MCF 10A (cell line): ENCODE measurements at regions of chr14 and their contacts with region 1.

Region 1: DNA sequence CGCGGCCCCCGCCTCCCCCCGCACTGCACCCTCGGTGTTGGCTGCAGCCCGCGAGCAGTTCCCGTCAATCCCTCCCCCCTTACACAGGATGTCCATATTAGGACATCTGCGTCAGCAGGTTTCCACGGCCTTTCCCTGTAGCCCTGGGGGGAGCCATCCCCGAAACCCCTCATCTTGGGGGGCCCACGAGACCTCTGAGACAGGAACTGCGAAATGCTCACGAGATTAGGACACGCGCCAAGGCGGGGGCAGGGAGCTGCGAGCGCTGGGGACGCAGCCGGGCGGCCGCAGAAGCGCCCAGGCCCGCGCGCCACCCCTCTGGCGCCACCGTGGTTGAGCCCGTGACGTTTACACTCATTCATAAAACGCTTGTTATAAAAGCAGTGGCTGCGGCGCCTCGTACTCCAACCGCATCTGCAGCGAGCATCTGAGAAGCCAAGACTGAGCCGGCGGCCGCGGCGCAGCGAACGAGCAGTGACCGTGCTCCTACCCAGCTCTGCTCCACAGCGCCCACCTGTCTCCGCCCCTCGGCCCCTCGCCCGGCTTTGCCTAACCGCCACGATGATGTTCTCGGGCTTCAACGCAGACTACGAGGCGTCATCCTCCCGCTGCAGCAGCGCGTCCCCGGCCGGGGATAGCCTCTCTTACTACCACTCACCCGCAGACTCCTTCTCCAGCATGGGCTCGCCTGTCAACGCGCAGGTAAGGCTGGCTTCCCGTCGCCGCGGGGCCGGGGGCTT is at the start of gene FOS:
- DNase-seq: peak; percentile 95
- H3K4me3 Mint-ChIP-seq: peak within 1 kb of the TSS; percentile 88
- H3K27ac Mint-ChIP-seq: peak within 1 kb of the TSS; percentile 99
- H3K4me1 Mint-ChIP-seq: peaks cover 31% of the 10 kb centered on the region
- H3K27me3 Mint-ChIP-seq: peaks cover 11% of the 10 kb centered on the region
- CTCF ChIP-seq: no peak
- total RNA-seq, gene FOS: 73.1 and 139 TPM in 2 replicates

Region 2: GRCh38 chr14:75126679-75127473 is 151.7 kb before region 1 on chr14 and contains the start of gene NEK9:
- CTCF ChIA-PET with region 1: interaction called, 15 read pairs
- POLR2A ChIA-PET with region 1: interaction called, 37 read pairs
- intact Hi-C with region 1: loop called (anchors 1 kb)
- DNase-seq: peak; percentile 88
- H3K4me3 Mint-ChIP-seq: peak within 1 kb of the TSS; percentile 72
- H3K27ac Mint-ChIP-seq: peak within 1 kb of the TSS; percentile 99
- H3K4me1 Mint-ChIP-seq: peaks cover 33% of the 10 kb centered on the region
- H3K27me3 Mint-ChIP-seq: no peaks in the 10 kb centered on the region
- CTCF ChIP-seq: no peak
- total RNA-seq, gene NEK9: 112 and 113 TPM in 2 replicates

Region 3: DNA sequence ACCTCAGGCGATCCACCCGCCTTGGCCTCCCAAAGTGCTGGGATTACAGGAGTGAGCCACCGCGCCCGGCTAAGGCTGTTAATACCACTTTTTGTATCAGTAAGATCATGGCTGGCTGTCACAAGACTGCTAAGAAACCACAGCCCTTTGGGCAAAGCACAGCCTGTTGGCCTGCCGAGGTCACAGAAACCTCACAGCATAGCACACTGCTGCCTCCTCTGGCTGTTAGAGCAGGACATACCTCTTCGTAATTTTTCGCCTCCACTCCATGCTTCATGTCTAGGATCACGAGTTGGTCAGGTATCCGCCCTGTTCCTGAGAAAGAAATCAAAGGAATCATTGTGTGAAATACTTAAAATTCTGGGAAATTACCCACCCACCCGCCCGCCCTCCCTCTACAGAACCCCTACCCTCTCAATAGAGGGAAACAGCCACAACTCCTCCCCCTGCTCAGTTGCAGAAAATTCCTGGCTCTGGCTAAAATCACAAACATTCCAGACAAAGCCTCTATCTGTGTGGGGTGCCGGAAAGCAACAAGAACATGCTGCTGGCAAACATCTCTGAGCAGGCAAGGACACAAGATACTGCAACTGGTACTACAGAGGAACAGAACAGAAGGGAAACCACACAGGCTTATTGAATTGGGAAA is 131.0 kb before region 1 on chr14:
- CTCF ChIA-PET with region 1: interaction called, 5 read pairs
- POLR2A ChIA-PET with region 1: interaction called, 12 read pairs
- intact Hi-C with region 1: loop called (anchors 5 kb)
- DNase-seq: peak; percentile 38
- H3K4me3 Mint-ChIP-seq: peak overlapping the region; percentile 66
- H3K27ac Mint-ChIP-seq: peak overlapping the region; percentile 91
- H3K4me1 Mint-ChIP-seq: peaks cover 60% of the 10 kb centered on the region
- H3K27me3 Mint-ChIP-seq: no peaks in the 10 kb centered on the region
- CTCF ChIP-seq: peak; percentile 32

Region 4: DNA sequence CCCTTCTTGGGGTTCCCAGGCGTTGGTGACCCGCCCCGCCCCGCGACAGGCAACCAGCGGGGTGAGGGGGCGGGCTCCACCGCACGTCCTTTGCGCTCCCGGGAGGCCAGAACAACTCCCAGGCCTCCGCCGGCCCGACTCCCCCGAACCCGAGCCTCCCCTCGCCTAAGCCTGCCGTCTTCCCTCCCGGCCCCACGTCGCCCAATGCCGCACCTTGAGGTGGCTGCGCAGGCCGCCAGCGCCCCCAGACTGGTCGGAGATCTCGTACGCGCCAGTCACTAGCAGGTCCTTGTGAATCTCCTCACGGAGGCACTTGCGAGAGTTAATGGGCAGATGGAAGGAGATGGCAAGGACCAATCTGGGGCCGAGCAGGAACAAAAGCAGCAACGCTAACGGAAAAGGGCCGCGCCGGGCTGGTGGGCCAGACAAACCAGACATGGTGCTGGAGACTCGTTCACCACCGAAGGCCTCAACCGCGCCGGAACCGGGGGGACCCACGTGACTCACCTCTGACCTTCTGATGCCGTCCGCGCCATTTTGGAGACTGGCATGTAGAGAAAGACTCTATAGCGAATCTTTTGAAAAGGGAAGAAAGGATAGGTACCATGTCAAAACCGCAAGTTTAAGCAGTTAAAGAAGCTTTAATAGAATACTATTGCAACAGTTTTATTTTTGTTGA is 102.3 kb before region 1 on chr14 and contains the start of gene TMED10:
- CTCF ChIA-PET with region 1: interaction called, 5 read pairs
- POLR2A ChIA-PET with region 1: interaction called, 41 read pairs
- intact Hi-C with region 1: loop called (anchors 1 kb)
- DNase-seq: peak; percentile 93
- H3K4me3 Mint-ChIP-seq: peak within 1 kb of the TSS; percentile 98
- H3K27ac Mint-ChIP-seq: peak within 1 kb of the TSS; percentile 99
- H3K4me1 Mint-ChIP-seq: peaks cover 22% of the 10 kb centered on the region
- H3K27me3 Mint-ChIP-seq: no peaks in the 10 kb centered on the region
- CTCF ChIP-seq: no peak
- total RNA-seq, gene TMED10: 454 and 526 TPM in 2 replicates

Region 5: GRCh38 chr14:75217508-75218206 is 60.9 kb before region 1 on chr14:
- CTCF ChIA-PET with region 1: no interaction called
- POLR2A ChIA-PET with region 1: interaction called, 14 read pairs
- intact Hi-C with region 1: no loop called
- DNase-seq: no peak
- H3K4me3 Mint-ChIP-seq: no peak overlapping the region
- H3K27ac Mint-ChIP-seq: no peak overlapping the region
- H3K4me1 Mint-ChIP-seq: peaks cover 19% of the 10 kb centered on the region
- H3K27me3 Mint-ChIP-seq: no peaks in the 10 kb centered on the region
- CTCF ChIP-seq: no peak

Region 6: DNA sequence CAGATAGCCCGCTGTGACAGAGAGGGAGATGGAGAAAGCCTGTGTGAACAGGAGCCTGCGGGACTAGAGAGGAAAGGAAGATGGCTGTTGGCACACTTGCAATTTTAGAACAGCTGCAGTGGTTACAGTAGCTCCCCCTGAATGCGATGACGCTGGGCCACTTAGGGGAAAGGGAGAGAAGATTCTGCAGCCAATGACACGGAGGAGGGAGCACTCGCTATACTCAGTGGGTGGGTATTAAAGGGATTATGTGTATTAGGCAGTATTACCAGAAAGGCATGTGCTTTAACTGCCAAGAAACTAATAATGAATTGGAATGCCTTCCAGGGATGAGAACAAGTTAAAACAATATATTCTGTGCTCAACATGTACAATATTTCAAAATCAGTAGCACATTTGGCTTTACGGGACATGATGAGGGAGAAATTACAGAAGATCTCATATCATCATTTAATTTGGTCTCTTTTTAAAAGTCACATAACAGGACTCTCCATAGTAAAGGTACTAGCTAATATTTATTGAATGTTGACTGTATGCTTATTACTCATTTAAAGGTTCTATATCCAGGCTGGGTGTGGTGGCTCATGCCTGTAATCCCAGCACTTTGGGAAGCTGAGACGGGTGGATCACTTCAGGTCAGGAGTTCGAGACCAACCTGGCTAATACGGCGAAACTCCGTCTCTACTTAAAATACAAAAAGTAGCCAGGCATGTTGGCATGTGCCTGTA is 35.9 kb before region 1 on chr14:
- CTCF ChIA-PET with region 1: interaction called, 4 read pairs
- POLR2A ChIA-PET with region 1: interaction called, 53 read pairs
- intact Hi-C with region 1: no loop called
- DNase-seq: peak; percentile 95
- H3K4me3 Mint-ChIP-seq: peak overlapping the region; percentile 2
- H3K27ac Mint-ChIP-seq: peak overlapping the region; percentile 57
- H3K4me1 Mint-ChIP-seq: peaks cover 10% of the 10 kb centered on the region
- H3K27me3 Mint-ChIP-seq: no peaks in the 10 kb centered on the region
- CTCF ChIP-seq: no peak

Region 7: GRCh38 chr14:75267141-75267721 is 11.4 kb before region 1 on chr14:
- CTCF ChIA-PET with region 1: interaction called, 3 read pairs
- POLR2A ChIA-PET with region 1: interaction called, 31 read pairs
- intact Hi-C with region 1: no loop called
- DNase-seq: no peak
- H3K4me3 Mint-ChIP-seq: no peak overlapping the region
- H3K27ac Mint-ChIP-seq: no peak overlapping the region
- H3K4me1 Mint-ChIP-seq: no peaks in the 10 kb centered on the region
- H3K27me3 Mint-ChIP-seq: no peaks in the 10 kb centered on the region
- CTCF ChIP-seq: no peak